Mammary epithelial cell (primary cell): ENCODE measurements at regions of chr7 and their contacts with region 1.

Region 1: GRCh38 chr7:123865517-123866117 is 20.6 kb downstream of the HYAL4 start:
- DNase-seq: peak; percentile 55
- H3K4me3 ChIP-seq: no peak overlapping the region
- H3K27ac ChIP-seq: no peak overlapping the region
- H3K4me1 ChIP-seq: peaks cover 24% of the 10 kb centered on the region
- H3K27me3 ChIP-seq: no peaks in the 10 kb centered on the region
- CTCF ChIP-seq: peak; percentile 59 to 69

Region 2: DNA sequence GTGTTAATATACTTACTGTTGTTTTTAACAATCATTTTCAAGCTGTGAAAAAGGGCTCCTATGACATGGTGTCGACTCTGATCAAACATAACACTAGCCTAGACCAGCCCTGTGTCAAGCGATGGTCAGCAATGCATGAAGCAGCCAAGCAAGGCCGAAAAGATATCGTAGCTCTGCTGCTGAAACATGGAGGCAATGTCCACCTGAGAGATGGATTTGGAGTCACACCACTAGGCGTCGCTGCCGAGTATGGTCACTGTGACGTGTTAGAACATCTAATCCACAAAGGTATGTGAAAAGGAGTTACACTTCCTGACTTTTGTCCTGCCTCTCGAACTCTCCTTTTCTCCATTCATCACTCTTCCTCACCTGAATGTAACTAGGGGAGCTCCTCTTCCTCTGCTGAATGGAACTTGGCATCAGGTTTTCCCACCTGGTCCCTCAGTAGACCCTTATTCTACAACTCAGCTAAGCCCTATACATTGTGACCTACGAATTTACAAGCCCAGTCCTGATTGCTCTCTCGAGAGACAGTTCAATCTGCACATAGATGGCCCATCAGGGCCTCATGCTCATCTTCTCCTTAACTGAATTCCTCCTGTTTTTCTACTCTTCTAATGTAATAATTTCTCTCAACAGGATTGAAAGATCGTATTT is 241.0 kb before region 1 on chr7:
- CTCF ChIA-PET with region 1: no interaction called
- dilution Hi-C with region 1: no loop called
- in situ Hi-C with region 1: loop called (anchors 25 kb)
- intact Hi-C with region 1: no loop called
- DNase-seq: peak; percentile 6
- H3K4me3 ChIP-seq: no peak overlapping the region
- H3K27ac ChIP-seq: no peak overlapping the region
- H3K4me1 ChIP-seq: no peaks in the 10 kb centered on the region
- H3K27me3 ChIP-seq: no peaks in the 10 kb centered on the region
- CTCF ChIP-seq: peak; percentile 62 to 86

Region 3: DNA sequence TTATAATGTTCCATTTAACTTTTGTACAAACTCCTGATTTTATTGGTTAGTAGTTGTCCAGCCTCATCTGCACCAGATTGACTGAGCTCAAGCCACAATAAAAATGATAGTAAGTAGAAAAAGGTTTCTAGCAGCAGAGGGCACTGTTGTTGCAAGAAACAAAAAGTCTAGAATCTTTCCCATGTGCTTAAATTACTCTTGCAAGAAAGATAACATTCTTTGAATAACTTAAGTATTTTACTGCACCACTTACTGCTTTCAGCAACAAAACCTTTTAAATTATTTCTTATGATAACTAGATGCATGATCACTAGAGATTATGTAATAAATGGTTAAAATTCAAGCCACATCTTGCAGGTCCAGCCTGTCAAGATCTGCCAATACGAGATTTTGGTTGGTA is 182.9 kb before region 1 on chr7:
- CTCF ChIA-PET with region 1: no interaction called
- dilution Hi-C with region 1: no loop called
- in situ Hi-C with region 1: no loop called
- intact Hi-C with region 1: loop called (anchors 1 kb)
- DNase-seq: peak; percentile 32
- H3K4me3 ChIP-seq: no peak overlapping the region
- H3K27ac ChIP-seq: no peak overlapping the region
- H3K4me1 ChIP-seq: no peaks in the 10 kb centered on the region
- H3K27me3 ChIP-seq: no peaks in the 10 kb centered on the region
- CTCF ChIP-seq: peak; percentile 52 to 57

Region 4: DNA sequence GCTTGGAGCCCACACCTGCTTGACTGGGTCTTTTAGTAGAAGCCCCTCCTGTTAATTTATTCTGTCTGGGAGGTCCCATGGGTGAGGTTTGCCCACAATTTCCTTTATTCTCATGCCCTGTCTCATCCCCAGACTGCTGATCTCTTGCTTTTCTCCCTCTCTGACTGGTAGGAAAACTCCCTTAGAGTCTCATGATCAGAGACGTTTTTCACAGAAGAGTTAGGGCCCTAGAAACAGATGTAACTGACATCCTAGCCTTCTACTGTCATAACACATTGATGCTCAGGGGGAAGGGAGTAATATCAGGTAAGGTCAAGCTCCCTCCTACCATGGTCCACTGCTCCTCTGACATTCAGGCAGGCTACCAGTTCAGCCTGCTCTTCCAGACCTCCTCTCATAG is 73.1 kb before region 1 on chr7:
- CTCF ChIA-PET with region 1: no interaction called
- dilution Hi-C with region 1: loop called (anchors 5 kb)
- in situ Hi-C with region 1: loop called (anchors 5 kb)
- intact Hi-C with region 1: no loop called
- DNase-seq: no peak
- H3K4me3 ChIP-seq: no peak overlapping the region
- H3K27ac ChIP-seq: no peak overlapping the region
- H3K4me1 ChIP-seq: peaks cover 6% of the 10 kb centered on the region
- H3K27me3 ChIP-seq: no peaks in the 10 kb centered on the region
- CTCF ChIP-seq: no peak

Region 5: DNA sequence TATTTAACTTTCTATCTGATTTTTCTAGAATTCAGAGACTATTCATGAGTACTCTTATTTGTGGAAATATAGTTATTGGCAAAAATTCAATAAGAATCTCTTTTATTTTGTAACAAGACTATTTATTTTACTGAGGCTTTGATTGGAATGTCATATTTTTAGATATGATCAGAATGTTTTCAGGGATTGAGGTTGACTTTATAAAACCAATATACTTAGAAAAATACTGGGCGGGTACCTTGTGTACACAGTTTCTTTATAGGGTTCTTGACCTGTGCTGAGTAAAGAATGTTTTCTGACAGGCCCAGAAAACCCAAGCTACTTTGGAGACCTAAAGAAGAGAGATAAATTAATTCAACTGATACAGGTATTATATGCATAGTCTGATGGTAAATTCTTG is 35.4 kb after region 1 on chr7:
- CTCF ChIA-PET with region 1: no interaction called
- dilution Hi-C with region 1: no loop called
- in situ Hi-C with region 1: no loop called
- intact Hi-C with region 1: no loop called
- DNase-seq: no peak
- H3K4me3 ChIP-seq: no peak overlapping the region
- H3K27ac ChIP-seq: no peak overlapping the region
- H3K4me1 ChIP-seq: no peaks in the 10 kb centered on the region
- H3K27me3 ChIP-seq: no peaks in the 10 kb centered on the region
- CTCF ChIP-seq: no peak